A673 (cell line): ENCODE measurements at regions of chr22 and their contacts with region 1.

Region 1: DNA sequence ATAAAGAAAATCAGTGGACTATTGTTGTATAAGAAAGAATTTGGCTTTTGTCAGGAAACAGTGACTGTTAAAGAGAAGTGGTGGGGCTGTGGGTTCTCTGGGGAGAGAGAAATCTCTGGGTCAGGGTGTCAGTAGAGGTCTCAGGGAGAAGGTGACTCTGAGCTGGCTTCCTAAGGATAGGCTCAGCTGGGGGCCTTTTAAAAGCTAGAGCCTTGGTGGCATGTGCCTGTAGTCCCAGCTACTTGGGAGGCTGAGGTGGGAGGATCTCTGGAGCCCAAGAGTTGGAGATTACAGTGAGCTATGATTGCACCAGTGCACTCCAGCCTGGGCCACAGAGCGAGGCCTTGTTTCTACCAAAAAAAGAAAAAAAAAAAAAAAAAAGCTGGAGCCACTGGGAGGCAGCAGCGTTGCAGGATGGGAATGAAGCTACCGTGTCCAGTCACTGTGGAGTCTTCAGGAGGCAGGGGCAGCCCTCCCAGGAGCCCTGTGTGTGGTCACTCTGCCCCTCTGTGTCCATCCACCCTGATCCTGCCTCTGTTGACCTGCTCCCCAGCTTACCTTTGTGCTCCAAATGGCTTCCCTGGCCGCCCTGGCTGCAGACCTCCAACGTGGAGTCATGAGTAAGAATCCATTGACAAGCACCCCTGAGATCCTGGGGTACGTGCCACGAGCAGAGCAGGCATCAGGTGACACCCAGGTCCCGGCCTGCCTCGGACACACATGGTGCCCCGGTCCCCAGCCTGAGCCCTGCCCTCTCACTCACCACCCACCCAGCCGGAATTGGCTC is 5.4 kb upstream of the MIF start:
- DNase-seq: peak; percentile 32
- H3K4me3 ChIP-seq: no peak overlapping the region
- H3K27ac ChIP-seq: no peak overlapping the region
- H3K4me1 ChIP-seq: peaks cover 3% of the 10 kb centered on the region
- H3K27me3 ChIP-seq: no peaks in the 10 kb centered on the region
- CTCF ChIP-seq: peak; percentile 43

Region 2: GRCh38 chr22:23742505-23743264 is 146.1 kb before region 1 on chr22:
- CTCF ChIA-PET with region 1: no interaction called
- POLR2A ChIA-PET with region 1: no interaction called
- intact Hi-C with region 1: no loop called
- DNase-seq: no peak
- H3K4me3 ChIP-seq: no peak overlapping the region
- H3K27ac ChIP-seq: no peak overlapping the region
- H3K4me1 ChIP-seq: no peaks in the 10 kb centered on the region
- H3K27me3 ChIP-seq: no peaks in the 10 kb centered on the region
- CTCF ChIP-seq: no peak

Region 3: GRCh38 chr22:23849009-23850006 is 39.5 kb before region 1 on chr22:
- CTCF ChIA-PET with region 1: no interaction called
- POLR2A ChIA-PET with region 1: no interaction called
- intact Hi-C with region 1: no loop called
- DNase-seq: peak; percentile 91
- H3K4me3 ChIP-seq: peak overlapping the region; percentile 19
- H3K27ac ChIP-seq: no peak overlapping the region
- H3K4me1 ChIP-seq: peaks cover 4% of the 10 kb centered on the region
- H3K27me3 ChIP-seq: no peaks in the 10 kb centered on the region
- CTCF ChIP-seq: peak; percentile 98

Region 4: GRCh38 chr22:23970816-23971486 is 82.1 kb after region 1 on chr22:
- CTCF ChIA-PET with region 1: no interaction called
- POLR2A ChIA-PET with region 1: no interaction called
- intact Hi-C with region 1: no loop called
- DNase-seq: no peak
- H3K4me3 ChIP-seq: no peak overlapping the region
- H3K27ac ChIP-seq: no peak overlapping the region
- H3K4me1 ChIP-seq: no peaks in the 10 kb centered on the region
- H3K27me3 ChIP-seq: no peaks in the 10 kb centered on the region
- CTCF ChIP-seq: no peak

Region 5: DNA sequence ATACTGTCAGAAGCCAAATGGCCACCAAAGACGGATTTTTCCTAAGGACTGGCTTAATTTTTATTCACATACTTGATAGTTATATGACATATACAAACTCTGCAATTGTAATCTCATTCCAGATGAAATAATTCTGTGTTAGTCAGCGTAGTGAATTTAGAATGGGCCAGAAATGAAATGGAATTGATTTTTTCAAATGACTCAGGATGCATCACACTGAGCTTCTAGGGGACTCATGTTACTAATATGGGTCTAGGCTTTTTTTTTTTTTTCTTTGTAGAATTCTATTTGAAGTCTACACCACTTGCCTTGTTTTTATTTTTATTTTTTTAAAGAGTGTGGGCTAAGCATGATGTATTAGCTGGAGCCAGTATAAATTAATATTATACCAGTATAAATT is 444.5 kb after region 1 on chr22:
- CTCF ChIA-PET with region 1: interaction called, 15 read pairs
- POLR2A ChIA-PET with region 1: no interaction called
- intact Hi-C with region 1: no loop called
- DNase-seq: no peak
- H3K4me3 ChIP-seq: no peak overlapping the region
- H3K27ac ChIP-seq: no peak overlapping the region
- H3K4me1 ChIP-seq: no peaks in the 10 kb centered on the region
- H3K27me3 ChIP-seq: no peaks in the 10 kb centered on the region
- CTCF ChIP-seq: no peak